Activated CD4-positive, alpha-beta T cell treated with anti-CD3 and anti-CD28 coated beads for 36 hours (primary cell): ENCODE measurements at regions of chr11 and their contacts with region 1.

Region 1: DNA sequence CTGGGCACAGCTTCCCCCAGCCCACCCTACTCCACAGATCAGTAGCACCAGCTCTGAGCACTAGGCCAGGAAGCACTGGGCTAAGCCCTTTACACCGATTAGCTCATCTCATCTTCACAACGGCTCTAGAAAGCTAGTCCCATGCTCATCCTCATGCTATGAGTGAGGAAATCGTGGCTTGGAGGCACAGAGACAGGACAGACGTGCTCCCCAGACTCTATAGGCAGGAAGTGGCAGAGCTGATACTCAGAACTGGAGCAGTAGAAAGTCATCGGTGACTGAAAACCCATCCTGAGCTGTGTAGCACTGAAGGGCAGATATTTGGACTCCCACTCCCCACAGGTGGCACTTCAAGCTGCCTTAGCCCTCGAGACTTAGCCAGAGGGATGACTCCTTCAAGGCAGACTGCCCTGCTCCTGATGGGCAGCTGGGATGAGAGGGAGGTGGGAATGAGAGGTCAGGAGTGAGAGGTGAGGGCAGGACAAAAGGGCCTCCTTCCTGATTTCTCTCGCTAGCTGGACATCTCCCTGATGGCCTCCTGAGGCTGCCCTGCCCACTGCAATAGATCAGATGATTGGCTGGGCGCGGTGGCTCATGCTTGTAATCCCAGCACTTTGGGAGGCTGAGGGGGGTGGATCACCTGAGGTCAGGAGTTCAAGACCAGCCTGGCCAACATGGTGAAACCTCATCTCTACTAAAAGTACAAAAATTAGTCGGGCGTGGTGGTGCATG is 9.7 kb downstream of the CD5 start:
- DNase-seq: peak; percentile 86
- ATAC-seq: peak; percentile 90
- H3K4me3 Mint-ChIP-seq: no peak overlapping the region
- H3K27ac Mint-ChIP-seq: no peak overlapping the region
- H3K4me1 Mint-ChIP-seq: peaks cover 99% of the 10 kb centered on the region
- H3K27me3 Mint-ChIP-seq: no peaks in the 10 kb centered on the region

Region 2: GRCh38 chr11:60775420-60775961 is 336.5 kb before region 1 on chr11:
- CTCF ChIA-PET with region 1: no interaction called
- POLR2A ChIA-PET with region 1: no interaction called
- intact Hi-C with region 1: no loop called
- DNase-seq: peak; percentile 91
- ATAC-seq: peak; percentile 98
- H3K4me3 Mint-ChIP-seq: no peak overlapping the region
- H3K27ac Mint-ChIP-seq: no peak overlapping the region
- H3K4me1 Mint-ChIP-seq: peaks cover 7% of the 10 kb centered on the region
- H3K27me3 Mint-ChIP-seq: no peaks in the 10 kb centered on the region

Region 3: DNA sequence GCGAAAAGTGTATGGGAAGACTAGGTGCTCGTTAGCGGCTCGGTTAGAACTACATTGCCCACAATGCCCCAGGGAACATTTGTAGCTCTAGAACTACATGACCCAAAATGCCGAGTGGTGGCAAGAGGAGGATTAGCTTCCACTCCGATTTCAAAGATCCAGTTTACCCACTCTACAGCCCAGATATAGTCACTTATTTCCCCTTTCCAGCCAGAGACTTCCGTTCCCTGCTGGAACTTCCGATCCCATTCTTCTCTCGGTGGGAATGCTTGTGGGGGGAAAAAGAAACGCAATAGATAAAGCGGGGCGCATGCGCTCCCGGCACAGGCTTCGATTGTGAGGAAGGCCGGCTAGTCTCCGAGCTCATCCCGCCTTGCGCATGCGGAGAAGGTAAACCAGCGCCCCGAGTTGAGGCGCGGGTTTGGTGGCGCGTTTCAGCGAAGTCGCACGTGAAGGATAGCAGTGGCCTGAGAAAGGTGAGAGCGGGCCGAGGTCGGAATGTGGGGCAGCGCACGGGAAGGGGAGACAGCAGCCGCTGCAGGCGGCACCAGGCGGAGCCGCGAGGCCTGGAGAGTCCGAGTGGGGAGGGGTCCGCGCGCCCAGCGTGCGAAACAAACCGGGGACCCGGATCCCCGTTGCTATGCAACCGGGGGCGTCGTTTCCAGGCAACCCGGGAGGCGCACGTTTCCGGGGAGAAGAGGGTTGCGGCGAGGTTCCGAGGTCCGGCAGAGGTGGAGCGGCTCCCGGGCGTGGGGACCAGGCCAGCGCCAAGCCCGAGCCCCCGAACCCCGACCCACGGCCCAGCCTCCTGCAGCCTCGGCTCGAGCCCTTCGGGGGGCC is 197.9 kb before region 1 on chr11 and contains the start of gene TMEM109:
- CTCF ChIA-PET with region 1: interaction called, 6 read pairs
- POLR2A ChIA-PET with region 1: no interaction called
- intact Hi-C with region 1: loop called in 1 of 2 experiments (anchors 5 kb)
- DNase-seq: peak; percentile 93
- ATAC-seq: peak; percentile 78
- H3K4me3 Mint-ChIP-seq: peak within 1 kb of the TSS; percentile 87
- H3K27ac Mint-ChIP-seq: peak within 1 kb of the TSS; percentile 97
- H3K4me1 Mint-ChIP-seq: peaks cover 58% of the 10 kb centered on the region
- H3K27me3 Mint-ChIP-seq: no peaks in the 10 kb centered on the region
- total RNA-seq, gene TMEM109: 80.3 to 89.1 TPM

Region 4: DNA sequence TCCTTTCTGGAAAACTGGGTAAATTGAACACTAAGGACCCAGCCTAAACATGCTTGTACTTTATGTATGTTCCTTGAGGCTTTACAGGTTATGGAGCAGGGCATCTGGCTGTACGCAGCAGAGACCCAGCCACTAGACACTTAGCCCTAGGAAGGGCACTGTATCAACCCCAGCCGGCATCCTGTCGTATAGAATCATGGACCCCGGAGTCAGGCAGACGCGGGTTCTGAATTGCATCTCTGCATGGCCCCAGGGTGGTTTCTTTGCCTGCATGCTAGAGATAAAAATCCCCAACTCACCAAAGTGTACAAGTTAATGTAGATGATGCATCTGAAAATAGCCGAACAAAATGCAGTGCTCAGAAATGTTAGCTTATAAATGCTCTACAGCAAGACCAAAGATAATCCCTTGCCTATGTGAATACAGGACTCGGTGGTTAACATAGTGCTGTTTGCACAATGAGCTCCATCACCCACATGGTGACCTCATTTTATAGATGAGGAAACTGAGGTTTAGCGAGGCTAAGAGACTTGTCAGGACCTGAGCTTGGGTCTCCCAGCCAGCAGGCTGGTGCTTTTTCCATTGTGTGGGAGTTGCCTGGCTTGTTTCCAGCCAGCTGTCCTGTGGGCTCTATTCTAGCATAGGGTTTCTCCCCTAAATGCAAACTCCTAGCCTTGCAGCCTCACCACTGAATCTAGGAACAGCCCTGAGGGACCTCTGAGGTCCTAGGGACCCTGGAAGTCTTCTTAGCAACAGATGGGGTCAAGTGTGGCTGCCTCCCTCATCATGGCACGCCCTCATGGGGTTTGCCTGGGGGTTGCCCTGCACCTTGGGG is 133.2 kb before region 1 on chr11:
- CTCF ChIA-PET with region 1: interaction called, 8 read pairs
- POLR2A ChIA-PET with region 1: interaction called, 4 read pairs
- intact Hi-C with region 1: loop called in 1 of 2 experiments (anchors 2 kb)
- DNase-seq: peak; percentile 91
- ATAC-seq: peak; percentile 61
- H3K4me3 Mint-ChIP-seq: peak overlapping the region; percentile 87
- H3K27ac Mint-ChIP-seq: peak overlapping the region; percentile 95
- H3K4me1 Mint-ChIP-seq: peaks cover 74% of the 10 kb centered on the region
- H3K27me3 Mint-ChIP-seq: no peaks in the 10 kb centered on the region

Region 5: DNA sequence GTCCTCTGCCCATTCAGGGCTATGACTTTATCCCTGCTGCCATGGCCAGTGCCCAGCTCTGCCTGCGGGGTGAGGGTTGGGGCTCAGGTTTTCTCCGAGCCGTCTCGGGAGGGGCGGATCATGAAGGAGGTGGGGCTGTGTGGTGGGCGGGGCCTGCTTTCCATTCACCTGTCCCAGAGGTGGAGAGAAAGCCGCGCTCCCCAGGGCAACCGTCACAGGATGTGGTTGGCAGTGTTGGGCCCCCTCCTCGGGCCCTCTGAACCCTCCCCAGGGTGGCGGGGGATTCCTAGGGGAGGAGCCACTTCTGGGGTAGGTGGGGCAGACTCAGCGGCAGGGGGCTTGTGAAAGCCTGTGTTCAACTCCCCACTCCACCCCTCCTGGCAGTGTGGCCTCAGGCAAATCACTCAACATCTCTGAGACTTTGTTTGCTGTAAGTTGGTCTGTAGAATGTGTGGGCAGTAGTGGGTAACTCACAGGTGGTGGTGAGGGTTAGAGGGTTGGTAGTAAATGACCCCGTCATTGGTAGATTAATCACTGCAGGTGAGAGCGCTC is 90.2 kb before region 1 on chr11:
- CTCF ChIA-PET with region 1: interaction called, 5 read pairs
- POLR2A ChIA-PET with region 1: interaction called, 7 read pairs
- intact Hi-C with region 1: loop called (anchors 2 kb)
- DNase-seq: peak; percentile 94
- ATAC-seq: peak; percentile 50
- H3K4me3 Mint-ChIP-seq: peak overlapping the region; percentile 79
- H3K27ac Mint-ChIP-seq: peak overlapping the region; percentile 97
- H3K4me1 Mint-ChIP-seq: peaks cover 92% of the 10 kb centered on the region
- H3K27me3 Mint-ChIP-seq: no peaks in the 10 kb centered on the region

Region 6: GRCh38 chr11:61054927-61055562 is 56.9 kb before region 1 on chr11:
- CTCF ChIA-PET with region 1: interaction called, 12 read pairs
- POLR2A ChIA-PET with region 1: interaction called, 14 read pairs
- intact Hi-C with region 1: loop called in 1 of 2 experiments (anchors 2 kb)
- DNase-seq: peak; percentile 79
- ATAC-seq: peak; percentile 77
- H3K4me3 Mint-ChIP-seq: peak overlapping the region; percentile 42
- H3K27ac Mint-ChIP-seq: peak overlapping the region; percentile 92
- H3K4me1 Mint-ChIP-seq: peaks cover 87% of the 10 kb centered on the region
- H3K27me3 Mint-ChIP-seq: no peaks in the 10 kb centered on the region

Region 7: DNA sequence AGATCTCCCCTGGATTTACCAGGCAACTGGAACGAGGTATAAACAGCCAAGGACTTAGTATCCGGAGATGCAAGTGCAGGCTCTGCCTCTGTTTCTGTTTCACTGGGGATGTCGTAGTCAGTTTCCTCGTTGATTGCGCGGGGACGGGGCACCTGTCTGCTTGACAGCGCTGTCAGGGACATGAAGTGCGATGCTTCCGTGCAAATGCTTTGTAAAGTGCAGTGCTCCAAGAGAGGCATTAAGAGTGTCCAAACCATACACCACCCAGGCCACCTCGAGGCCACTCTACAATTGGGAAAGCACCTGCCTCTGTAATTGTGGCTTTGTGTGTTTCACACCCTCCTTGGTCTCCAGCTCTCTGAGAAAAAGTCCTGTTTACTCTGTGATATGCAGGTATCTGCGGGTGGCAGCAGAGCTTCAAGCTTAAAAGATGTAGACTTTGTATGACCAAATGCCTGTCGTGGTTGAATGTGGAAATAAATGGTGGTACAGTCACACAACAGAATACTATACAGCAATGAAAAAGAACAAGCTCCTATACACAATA is 28.3 kb before region 1 on chr11:
- CTCF ChIA-PET with region 1: interaction called, 11 read pairs
- POLR2A ChIA-PET with region 1: interaction called, 14 read pairs
- intact Hi-C with region 1: loop called (anchors 2 to 5 kb)
- DNase-seq: peak; percentile 86
- ATAC-seq: peak; percentile 66
- H3K4me3 Mint-ChIP-seq: peak overlapping the region; percentile 87
- H3K27ac Mint-ChIP-seq: peak overlapping the region; percentile 99
- H3K4me1 Mint-ChIP-seq: peaks cover 64% of the 10 kb centered on the region
- H3K27me3 Mint-ChIP-seq: no peaks in the 10 kb centered on the region

Region 8: GRCh38 chr11:61129639-61130523 is 17.9 kb after region 1 on chr11:
- CTCF ChIA-PET with region 1: interaction called, 18 read pairs
- POLR2A ChIA-PET with region 1: interaction called, 3 read pairs
- intact Hi-C with region 1: loop called in 1 of 2 experiments (anchors 2 kb)
- DNase-seq: peak; percentile 97
- ATAC-seq: peak; percentile 89
- H3K4me3 Mint-ChIP-seq: peak overlapping the region; percentile 14
- H3K27ac Mint-ChIP-seq: peak overlapping the region; percentile 64
- H3K4me1 Mint-ChIP-seq: peaks cover 27% of the 10 kb centered on the region
- H3K27me3 Mint-ChIP-seq: no peaks in the 10 kb centered on the region

Region 9: GRCh38 chr11:61384271-61385242 is 272.6 kb after region 1 on chr11:
- CTCF ChIA-PET with region 1: no interaction called
- POLR2A ChIA-PET with region 1: no interaction called
- intact Hi-C with region 1: no loop called
- DNase-seq: no peak
- ATAC-seq: no peak
- H3K4me3 Mint-ChIP-seq: no peak overlapping the region
- H3K27ac Mint-ChIP-seq: no peak overlapping the region
- H3K4me1 Mint-ChIP-seq: peaks cover 3% of the 10 kb centered on the region
- H3K27me3 Mint-ChIP-seq: no peaks in the 10 kb centered on the region